Activated CD4-positive, alpha-beta memory T cell treated with anti-CD3 and anti-CD28 coated beads for 36 hours (primary cell): ENCODE measurements at regions of chr13 and their contacts with region 1.

Region 1: GRCh38 chr13:97109841-97110492 is 112.2 kb upstream of the MBNL2 start:
- DNase-seq: peak; percentile 86
- H3K4me3 Mint-ChIP-seq: no peak overlapping the region
- H3K27ac Mint-ChIP-seq: no peak overlapping the region
- H3K4me1 Mint-ChIP-seq: peaks cover 13% of the 10 kb centered on the region
- H3K27me3 Mint-ChIP-seq: peaks cover 14% of the 10 kb centered on the region

Region 2: DNA sequence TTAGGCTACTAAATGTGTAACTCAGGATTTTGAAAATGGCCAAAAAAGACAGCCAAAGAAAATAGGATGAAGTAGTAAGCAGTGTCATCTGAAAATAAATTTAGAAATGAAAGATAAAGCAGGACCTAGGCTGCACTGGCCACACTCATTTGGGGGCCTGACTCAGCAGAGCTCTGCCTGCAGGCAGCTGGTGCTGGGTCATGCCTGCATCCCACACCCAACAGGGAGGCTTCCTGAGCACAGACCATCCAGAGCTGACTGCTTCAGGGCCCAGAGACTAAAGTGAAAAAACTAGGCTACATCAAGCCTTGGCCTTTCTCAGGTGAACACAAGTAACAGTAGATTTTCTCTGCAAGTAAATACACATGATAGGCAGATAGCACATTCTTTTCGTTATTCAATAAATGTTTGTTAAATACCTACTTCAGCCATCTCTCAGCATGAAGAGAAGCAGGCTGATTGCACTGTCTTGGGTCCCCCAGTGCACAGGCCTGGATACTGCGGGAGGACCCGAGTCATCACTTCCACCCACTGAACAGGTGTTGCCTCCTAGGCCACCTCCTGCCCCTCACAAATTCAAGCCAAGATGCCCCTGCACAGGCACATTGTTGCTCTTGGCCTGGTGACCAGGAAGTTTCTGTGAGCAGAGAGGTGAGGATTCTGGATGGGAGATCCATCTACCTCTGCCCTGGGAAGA is 399.7 kb before region 1 on chr13:
- CTCF ChIA-PET with region 1: no interaction called
- POLR2A ChIA-PET with region 1: no interaction called
- intact Hi-C with region 1: no loop called
- DNase-seq: no peak
- H3K4me3 Mint-ChIP-seq: no peak overlapping the region
- H3K27ac Mint-ChIP-seq: no peak overlapping the region
- H3K4me1 Mint-ChIP-seq: no peaks in the 10 kb centered on the region
- H3K27me3 Mint-ChIP-seq: no peaks in the 10 kb centered on the region

Region 3: GRCh38 chr13:96744367-96745331 is 365.3 kb before region 1 on chr13:
- CTCF ChIA-PET with region 1: no interaction called
- POLR2A ChIA-PET with region 1: no interaction called
- intact Hi-C with region 1: no loop called
- DNase-seq: no peak
- H3K4me3 Mint-ChIP-seq: no peak overlapping the region
- H3K27ac Mint-ChIP-seq: no peak overlapping the region
- H3K4me1 Mint-ChIP-seq: no peaks in the 10 kb centered on the region
- H3K27me3 Mint-ChIP-seq: no peaks in the 10 kb centered on the region

Region 4: DNA sequence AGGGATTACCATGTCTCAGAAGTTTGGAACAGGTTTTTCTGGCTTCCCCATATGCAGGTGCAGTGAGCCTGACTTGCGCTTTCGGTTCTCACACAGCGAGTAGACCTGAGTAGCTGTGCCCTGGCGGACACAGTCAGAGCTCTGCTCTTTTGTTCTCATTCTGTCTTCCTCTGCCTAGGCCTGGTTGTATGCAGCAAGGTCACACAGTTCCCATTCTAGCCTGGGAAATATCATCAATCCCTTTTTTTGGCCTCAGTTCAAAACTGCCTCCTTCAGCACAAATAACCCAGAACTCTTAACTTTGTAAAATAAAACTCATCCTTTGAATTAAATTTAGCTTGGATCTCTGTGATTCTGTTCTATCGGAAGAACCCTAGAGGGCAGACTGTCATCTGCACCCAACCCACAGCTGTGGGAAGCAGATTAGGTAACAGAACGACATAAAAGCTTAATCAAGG is 125.9 kb before region 1 on chr13:
- CTCF ChIA-PET with region 1: no interaction called
- POLR2A ChIA-PET with region 1: no interaction called
- intact Hi-C with region 1: no loop called
- DNase-seq: no peak
- H3K4me3 Mint-ChIP-seq: no peak overlapping the region
- H3K27ac Mint-ChIP-seq: no peak overlapping the region
- H3K4me1 Mint-ChIP-seq: peaks cover 4% of the 10 kb centered on the region
- H3K27me3 Mint-ChIP-seq: peaks cover 3% of the 10 kb centered on the region

Region 5: GRCh38 chr13:97124916-97125809 is 15.2 kb after region 1 on chr13:
- CTCF ChIA-PET with region 1: interaction called, 39 read pairs
- POLR2A ChIA-PET with region 1: no interaction called
- intact Hi-C with region 1: no loop called
- DNase-seq: peak; percentile 74
- H3K4me3 Mint-ChIP-seq: no peak overlapping the region
- H3K27ac Mint-ChIP-seq: peak overlapping the region; percentile 7
- H3K4me1 Mint-ChIP-seq: peaks cover 34% of the 10 kb centered on the region
- H3K27me3 Mint-ChIP-seq: peaks cover 41% of the 10 kb centered on the region

Region 6: DNA sequence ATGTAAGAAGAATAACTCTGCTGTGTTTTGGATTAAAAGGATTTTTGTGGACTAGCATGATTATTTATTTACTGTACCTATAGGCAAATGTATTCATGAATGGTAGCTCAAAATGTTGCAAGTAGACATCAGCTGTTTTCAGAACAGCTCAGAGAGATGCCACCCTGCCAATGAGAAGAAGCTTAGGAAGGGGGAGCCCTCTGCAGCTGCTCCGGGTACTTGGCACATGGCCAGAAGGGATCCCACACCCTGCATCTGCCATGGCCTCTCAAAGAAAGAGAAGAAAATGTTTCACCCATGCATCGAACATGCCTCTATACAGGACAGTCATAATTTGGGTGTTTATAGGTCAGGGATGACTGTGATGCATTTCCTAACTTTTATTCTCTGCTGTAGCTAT is 81.6 kb after region 1 on chr13:
- CTCF ChIA-PET with region 1: interaction called, 17 read pairs
- POLR2A ChIA-PET with region 1: no interaction called
- intact Hi-C with region 1: no loop called
- DNase-seq: peak; percentile 16
- H3K4me3 Mint-ChIP-seq: no peak overlapping the region
- H3K27ac Mint-ChIP-seq: no peak overlapping the region
- H3K4me1 Mint-ChIP-seq: peaks cover 5% of the 10 kb centered on the region
- H3K27me3 Mint-ChIP-seq: no peaks in the 10 kb centered on the region

Region 7: GRCh38 chr13:97221989-97222700 is 112.2 kb after region 1 on chr13 and contains the start of gene MBNL2:
- CTCF ChIA-PET with region 1: interaction called, 91 read pairs
- POLR2A ChIA-PET with region 1: interaction called, 3 read pairs
- intact Hi-C with region 1: no loop called
- DNase-seq: peak; percentile 93
- H3K4me3 Mint-ChIP-seq: peak within 1 kb of the TSS; percentile 81
- H3K27ac Mint-ChIP-seq: peak within 1 kb of the TSS; percentile 91
- H3K4me1 Mint-ChIP-seq: peaks cover 31% of the 10 kb centered on the region
- H3K27me3 Mint-ChIP-seq: no peaks in the 10 kb centered on the region
- total RNA-seq, gene MBNL2: 23.4 to 24.6 TPM

Region 8: GRCh38 chr13:97344265-97345175 is 234.6 kb after region 1 on chr13:
- CTCF ChIA-PET with region 1: interaction called, 212 read pairs
- POLR2A ChIA-PET with region 1: interaction called, 3 read pairs
- intact Hi-C with region 1: loop called (anchors 1 kb)
- DNase-seq: peak; percentile 70
- H3K4me3 Mint-ChIP-seq: no peak overlapping the region
- H3K27ac Mint-ChIP-seq: no peak overlapping the region
- H3K4me1 Mint-ChIP-seq: peaks cover 12% of the 10 kb centered on the region
- H3K27me3 Mint-ChIP-seq: no peaks in the 10 kb centered on the region

Region 9: GRCh38 chr13:97369261-97369893 is 259.4 kb after region 1 on chr13:
- CTCF ChIA-PET with region 1: interaction called, 207 read pairs
- POLR2A ChIA-PET with region 1: no interaction called
- intact Hi-C with region 1: no loop called
- DNase-seq: no peak
- H3K4me3 Mint-ChIP-seq: peak overlapping the region; percentile 63
- H3K27ac Mint-ChIP-seq: no peak overlapping the region
- H3K4me1 Mint-ChIP-seq: peaks cover 19% of the 10 kb centered on the region
- H3K27me3 Mint-ChIP-seq: no peaks in the 10 kb centered on the region